ENCODE measurements at regions of chr16 and their contacts with region 1.

Region 1: GRCh38 chr16:27109666-27110523 is 43.2 kb downstream of the C16orf82 start:
- DNase-seq: peak; percentile 62
- ATAC-seq: peak; percentile 78
- H3K4me3 ChIP-seq: peak overlapping the region; percentile 25 to 53 (median 33); a peak in 3 of 6 replicates
- H3K27ac ChIP-seq: no peak overlapping the region
- H3K4me1 ChIP-seq: peaks cover 31% of the 10 kb centered on the region
- H3K27me3 ChIP-seq: no peaks in the 10 kb centered on the region
- CTCF ChIP-seq: peak; percentile 86
- EP300 ChIP-seq: no peak
- POLR2A ChIP-seq: no peak
- RAD21 ChIP-seq: peak; percentile 94

Region 2: DNA sequence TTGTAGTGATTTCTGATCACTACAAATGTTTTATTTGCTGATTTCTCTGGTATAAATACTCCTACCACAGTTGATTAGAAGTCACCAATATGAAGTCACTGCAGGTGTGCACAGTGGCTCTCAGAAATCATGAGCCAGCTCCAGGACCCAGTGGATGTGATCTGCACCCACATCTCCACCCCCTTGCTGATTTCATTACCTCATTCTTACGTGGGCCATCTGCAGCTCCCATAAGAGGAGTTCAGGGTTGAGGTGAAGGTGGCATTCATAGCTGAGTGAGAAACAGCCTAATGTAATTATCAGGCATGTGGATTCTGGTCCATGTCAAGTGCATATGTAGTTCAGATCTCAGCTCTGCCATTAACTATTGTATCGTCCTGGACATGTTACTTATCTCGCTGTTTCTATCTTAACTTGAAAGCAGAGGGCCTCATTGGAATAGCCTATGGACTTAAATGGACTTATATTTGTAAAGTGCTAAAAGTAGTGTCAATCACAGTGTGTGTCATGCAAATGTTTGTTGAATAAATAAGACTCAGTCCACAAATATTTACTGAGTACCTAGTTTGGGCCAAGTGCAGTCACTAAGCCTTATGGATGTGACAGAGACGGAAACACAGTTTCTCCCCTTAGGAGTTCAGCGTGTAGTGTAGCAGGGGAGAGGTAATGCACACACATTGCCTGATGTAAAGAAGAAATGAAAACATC is 1811.6 kb before region 1 on chr16:
- CTCF ChIA-PET with region 1: no interaction called
- POLR2A ChIA-PET with region 1: no interaction called
- in situ Hi-C with region 1: loop called (anchors 25 kb)
- intact Hi-C with region 1: no loop called
- DNase-seq: peak; percentile 44
- ATAC-seq: peak; percentile 94
- H3K4me3 ChIP-seq: no peak overlapping the region
- H3K27ac ChIP-seq: no peak overlapping the region
- H3K4me1 ChIP-seq: peaks cover 12% of the 10 kb centered on the region; the same call in 1 of the 2 replicates
- H3K27me3 ChIP-seq: peaks cover 1 to 12% of the 10 kb centered on the region in 2 experiments; a peak in 3 of 5 replicates
- CTCF ChIP-seq: no peak
- EP300 ChIP-seq: no peak
- POLR2A ChIP-seq: no peak
- RAD21 ChIP-seq: no peak

Region 3: GRCh38 chr16:25838724-25839186 is 1271.1 kb before region 1 on chr16:
- CTCF ChIA-PET with region 1: interaction called, 7 read pairs
- POLR2A ChIA-PET with region 1: no interaction called
- in situ Hi-C with region 1: loop called (anchors 10 kb)
- intact Hi-C with region 1: loop called (anchors 2 kb)
- DNase-seq: peak; percentile 69
- ATAC-seq: peak; percentile 51; the same call in 1 of the 3 replicates
- H3K4me3 ChIP-seq: no peak overlapping the region
- H3K27ac ChIP-seq: no peak overlapping the region
- H3K4me1 ChIP-seq: no peaks in the 10 kb centered on the region
- H3K27me3 ChIP-seq: peaks cover 0 to 4% of the 10 kb centered on the region in 2 experiments; a peak in 1 of 5 replicates
- CTCF ChIP-seq: peak; percentile 77
- EP300 ChIP-seq: no peak
- POLR2A ChIP-seq: no peak
- RAD21 ChIP-seq: 0 out of 2 replicates have a peak, but pooled peaks have one; percentile 20

Region 4: DNA sequence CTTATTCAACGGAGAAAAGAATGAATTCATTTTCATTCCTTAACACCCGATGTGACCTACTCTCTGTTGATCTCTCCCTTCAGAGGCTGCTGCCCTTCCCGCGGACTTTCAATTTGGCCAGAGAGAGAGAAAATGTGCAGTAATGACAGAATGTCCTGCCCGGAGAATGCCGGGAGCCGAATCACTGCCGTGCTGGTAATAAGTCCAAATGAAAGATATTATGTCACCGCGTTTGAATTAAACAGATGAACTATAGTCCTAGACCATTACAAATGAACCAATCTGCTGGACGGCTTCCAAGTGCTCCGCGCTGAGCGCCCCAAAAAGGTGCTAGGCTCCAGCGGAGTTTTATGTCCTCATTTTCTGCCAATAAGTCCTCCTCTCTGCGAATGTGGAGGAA is 57.9 kb before region 1 on chr16:
- CTCF ChIA-PET with region 1: no interaction called
- POLR2A ChIA-PET with region 1: no interaction called
- in situ Hi-C with region 1: loop called (anchors 10 kb)
- intact Hi-C with region 1: no loop called
- DNase-seq: no peak
- ATAC-seq: no peak
- H3K4me3 ChIP-seq: no peak overlapping the region
- H3K27ac ChIP-seq: no peak overlapping the region
- H3K4me1 ChIP-seq: no peaks in the 10 kb centered on the region
- H3K27me3 ChIP-seq: peaks cover 0 to 22% of the 10 kb centered on the region in 2 experiments; a peak in 3 of 5 replicates
- CTCF ChIP-seq: no peak
- EP300 ChIP-seq: no peak
- POLR2A ChIP-seq: no peak
- RAD21 ChIP-seq: no peak

Region 5: DNA sequence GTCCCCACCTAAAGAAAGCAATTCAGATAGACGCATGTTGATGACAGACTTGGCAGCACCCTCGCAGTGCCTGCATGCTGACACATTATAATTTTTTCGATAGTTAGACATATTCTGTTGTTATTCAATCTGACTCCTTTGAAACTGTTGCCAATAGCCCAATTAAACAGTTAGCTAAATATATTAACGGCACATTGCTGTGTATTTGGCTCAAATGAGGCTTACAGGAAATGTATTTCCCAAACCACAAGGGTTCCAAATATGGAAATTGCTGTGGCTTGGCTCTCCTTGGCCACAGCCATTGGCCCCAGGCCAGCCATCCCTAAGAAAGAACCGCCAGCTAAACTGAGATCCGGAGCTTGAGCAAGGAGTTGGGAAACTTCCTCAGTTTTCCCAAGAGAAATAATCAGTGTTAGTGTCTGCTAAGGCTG is 12.1 kb before region 1 on chr16:
- CTCF ChIA-PET with region 1: no interaction called
- POLR2A ChIA-PET with region 1: no interaction called
- in situ Hi-C with region 1: no loop called
- intact Hi-C with region 1: no loop called
- DNase-seq: no peak
- ATAC-seq: no peak
- H3K4me3 ChIP-seq: no peak overlapping the region
- H3K27ac ChIP-seq: no peak overlapping the region
- H3K4me1 ChIP-seq: no peaks in the 10 kb centered on the region
- H3K27me3 ChIP-seq: peaks cover 0 to 5% of the 10 kb centered on the region in 2 experiments; a peak in 2 of 5 replicates
- CTCF ChIP-seq: no peak
- EP300 ChIP-seq: no peak
- POLR2A ChIP-seq: no peak
- RAD21 ChIP-seq: no peak